ENCODE measurements at regions of chr2 and their contacts with region 1.

Region 1: GRCh38 chr2:118061135-118061955 is 26.9 kb upstream of the INSIG2 start:
- DNase-seq: peak; percentile 38
- CTCF ChIP-seq: peak; percentile 52

Region 2: GRCh38 chr2:117972425-117973138 is 88.8 kb before region 1 on chr2:
- CTCF ChIA-PET with region 1: no interaction called
- POLR2A ChIA-PET with region 1: no interaction called
- DNase-seq: no peak
- CTCF ChIP-seq: no peak

Region 3: DNA sequence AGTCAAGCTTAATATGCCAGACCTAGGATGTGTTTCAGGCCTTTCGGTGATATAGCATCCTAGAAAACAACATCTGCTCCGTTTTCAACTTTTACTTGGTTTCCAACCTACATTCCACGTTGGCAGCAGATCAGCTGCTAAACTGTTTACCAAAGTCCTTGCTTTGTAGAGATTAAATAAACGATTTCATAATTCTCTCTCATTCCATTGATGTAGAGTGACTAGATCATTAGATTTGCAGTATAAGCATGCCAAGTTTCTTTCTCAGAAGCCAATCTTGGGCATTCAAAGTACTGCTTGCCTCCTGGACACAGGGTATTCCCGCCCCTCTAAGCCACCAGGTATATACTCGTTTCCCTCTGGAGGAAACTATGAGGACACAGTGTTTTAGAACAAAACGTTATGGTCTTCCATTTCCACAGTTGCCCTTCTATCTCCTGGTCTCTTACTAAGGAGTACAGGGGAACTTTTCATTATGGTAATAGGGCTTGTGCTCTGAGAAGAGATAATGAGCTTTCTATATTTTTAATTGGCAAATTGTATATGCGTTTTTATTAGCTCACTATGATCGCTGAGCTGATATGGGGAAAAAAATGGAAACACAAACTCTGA is 16.4 kb after region 1 on chr2:
- CTCF ChIA-PET with region 1: interaction called, 38 read pairs
- POLR2A ChIA-PET with region 1: no interaction called
- DNase-seq: no peak
- CTCF ChIP-seq: no peak

Region 4: DNA sequence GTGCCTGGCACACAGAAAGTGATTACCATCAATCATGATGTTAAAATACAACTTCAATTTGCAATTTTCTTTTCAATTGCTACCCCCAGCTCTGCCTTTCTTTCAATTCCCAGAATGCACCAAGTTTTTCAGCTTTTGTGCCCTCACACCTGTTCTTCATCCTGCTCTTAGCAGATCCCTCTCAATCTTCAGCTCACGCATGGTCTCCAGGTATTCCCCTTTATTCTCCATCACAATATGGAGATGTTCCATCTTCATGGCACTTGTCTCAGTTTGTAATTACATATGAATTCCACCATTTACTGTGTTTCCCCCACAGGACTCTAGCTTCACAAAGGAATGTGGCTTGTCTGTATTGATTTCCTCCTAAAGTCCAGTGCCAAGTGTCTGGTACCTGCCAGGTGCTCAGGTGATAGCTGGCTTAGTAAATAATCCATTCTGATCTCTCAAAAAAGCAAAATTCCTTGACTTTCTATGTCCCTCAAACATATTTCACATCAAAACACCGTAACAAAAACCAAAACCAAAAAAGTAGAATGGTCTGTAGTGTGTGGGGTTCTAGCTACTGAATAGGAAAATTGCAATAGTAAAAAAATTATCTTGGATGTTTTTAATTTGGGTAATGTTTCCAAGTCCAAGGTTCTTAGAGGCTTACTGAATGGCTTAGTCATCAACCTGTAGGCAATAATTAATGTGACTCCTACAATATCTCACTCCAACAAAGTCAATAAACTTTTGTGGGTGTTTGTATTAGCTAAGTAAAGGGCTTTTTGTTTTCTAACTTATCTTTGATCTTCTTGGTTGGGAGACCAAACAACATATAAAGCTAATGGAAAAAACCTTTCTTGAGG is 24.1 kb after region 1 on chr2:
- CTCF ChIA-PET with region 1: interaction called, 11 read pairs
- POLR2A ChIA-PET with region 1: no interaction called
- DNase-seq: no peak
- CTCF ChIP-seq: no peak

Region 5: GRCh38 chr2:118380915-118381653 is 319.7 kb after region 1 on chr2:
- CTCF ChIA-PET with region 1: no interaction called
- POLR2A ChIA-PET with region 1: no interaction called
- DNase-seq: no peak
- CTCF ChIP-seq: no peak